ENCODE measurements at regions of chr14 and their contacts with region 1.

Region 1: DNA sequence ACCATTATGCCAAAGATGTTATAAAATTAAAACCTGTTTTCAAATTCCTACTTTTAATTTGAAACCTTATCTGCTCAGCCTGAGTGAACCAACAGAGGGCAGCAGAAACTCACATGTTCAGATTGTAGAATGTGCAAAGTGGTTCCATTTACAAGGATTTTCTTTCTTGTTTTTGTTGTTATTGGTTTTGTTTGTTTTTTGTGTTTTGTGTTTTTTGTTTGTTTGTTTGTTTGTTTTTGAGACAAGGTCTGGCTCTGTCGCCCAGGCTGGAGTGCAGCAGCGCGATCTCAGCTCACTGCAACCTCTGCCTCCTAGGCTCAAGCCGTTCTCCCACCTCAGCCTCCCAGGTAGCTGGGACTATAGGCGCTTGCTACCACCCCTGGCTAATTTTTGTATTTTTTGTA is 22.8 kb upstream of the GARIN2 start:
- DNase-seq: no peak
- H3K4me3 Mint-ChIP-seq: no peak overlapping the region
- H3K27ac Mint-ChIP-seq: no peak overlapping the region
- H3K4me1 Mint-ChIP-seq: peaks cover 19% of the 10 kb centered on the region
- H3K27me3 Mint-ChIP-seq: no peaks in the 10 kb centered on the region

Region 2: GRCh38 chr14:66965831-66966230 is 200.6 kb before region 1 on chr14:
- intact Hi-C with region 1: no loop called
- DNase-seq: no peak
- H3K4me3 Mint-ChIP-seq: no peak overlapping the region
- H3K27ac Mint-ChIP-seq: no peak overlapping the region
- H3K4me1 Mint-ChIP-seq: no peaks in the 10 kb centered on the region
- H3K27me3 Mint-ChIP-seq: no peaks in the 10 kb centered on the region

Region 3: GRCh38 chr14:67187210-67187609 is 20.8 kb after region 1 on chr14:
- intact Hi-C with region 1: loop called (anchors 2 kb)
- DNase-seq: no peak
- H3K4me3 Mint-ChIP-seq: no peak overlapping the region
- H3K27ac Mint-ChIP-seq: no peak overlapping the region
- H3K4me1 Mint-ChIP-seq: peaks cover 30% of the 10 kb centered on the region
- H3K27me3 Mint-ChIP-seq: no peaks in the 10 kb centered on the region

Region 4: DNA sequence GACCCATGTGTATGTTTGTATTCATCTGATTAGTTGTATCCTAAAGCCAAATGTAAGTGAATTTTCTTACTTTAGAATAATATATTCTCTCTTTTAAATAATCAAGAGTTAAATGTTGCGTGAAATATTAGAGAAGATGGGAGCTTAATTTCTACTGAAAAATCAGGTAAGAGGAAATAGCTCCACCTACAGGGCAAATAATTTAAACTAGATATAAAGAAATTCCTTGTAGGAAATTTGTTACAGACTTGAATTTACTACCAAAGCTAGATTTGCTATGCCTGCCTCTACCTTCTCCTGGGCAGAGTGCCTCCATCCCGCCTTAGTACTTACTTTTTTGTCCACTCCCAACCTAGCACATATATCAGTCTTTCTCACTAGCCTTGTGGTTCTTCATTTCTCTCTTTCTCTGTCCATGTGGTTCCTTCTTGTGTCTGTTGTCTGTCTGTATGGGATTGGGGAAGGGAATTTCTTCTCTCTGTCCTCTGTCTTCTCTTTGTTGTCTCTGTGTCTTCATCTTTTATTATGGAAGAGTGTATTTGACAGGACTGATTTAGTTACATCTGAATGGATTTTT is 119.5 kb after region 1 on chr14:
- intact Hi-C with region 1: loop called (anchors 1 kb)
- DNase-seq: no peak
- H3K4me3 Mint-ChIP-seq: no peak overlapping the region
- H3K27ac Mint-ChIP-seq: no peak overlapping the region
- H3K4me1 Mint-ChIP-seq: peaks cover 4% of the 10 kb centered on the region
- H3K27me3 Mint-ChIP-seq: no peaks in the 10 kb centered on the region

Region 5: DNA sequence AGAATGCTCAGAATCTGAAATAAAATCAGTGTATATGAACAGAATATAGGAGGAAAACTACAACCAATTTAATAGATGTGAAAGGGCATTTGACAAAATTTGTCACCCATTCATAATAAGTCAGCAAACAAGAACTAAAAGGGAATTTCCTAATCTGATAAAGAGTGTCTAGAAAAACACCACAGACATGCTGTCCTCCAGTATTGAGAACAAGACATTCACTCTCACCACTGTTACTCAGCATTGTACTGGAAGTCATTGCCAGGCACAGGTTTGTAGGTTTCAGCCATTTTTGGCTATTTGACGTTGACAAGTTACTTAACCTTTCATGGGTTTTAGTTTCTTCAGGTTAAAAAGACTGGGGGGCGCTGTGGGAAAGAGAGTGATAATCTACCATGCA is 206.9 kb after region 1 on chr14:
- intact Hi-C with region 1: no loop called
- DNase-seq: no peak
- H3K4me3 Mint-ChIP-seq: no peak overlapping the region
- H3K27ac Mint-ChIP-seq: peak overlapping the region; percentile 67
- H3K4me1 Mint-ChIP-seq: peaks cover 25% of the 10 kb centered on the region
- H3K27me3 Mint-ChIP-seq: no peaks in the 10 kb centered on the region